Naive thymus-derived CD4-positive, alpha-beta T cell (primary cell): ENCODE measurements at regions of chr13 and their contacts with region 1.

Region 1: DNA sequence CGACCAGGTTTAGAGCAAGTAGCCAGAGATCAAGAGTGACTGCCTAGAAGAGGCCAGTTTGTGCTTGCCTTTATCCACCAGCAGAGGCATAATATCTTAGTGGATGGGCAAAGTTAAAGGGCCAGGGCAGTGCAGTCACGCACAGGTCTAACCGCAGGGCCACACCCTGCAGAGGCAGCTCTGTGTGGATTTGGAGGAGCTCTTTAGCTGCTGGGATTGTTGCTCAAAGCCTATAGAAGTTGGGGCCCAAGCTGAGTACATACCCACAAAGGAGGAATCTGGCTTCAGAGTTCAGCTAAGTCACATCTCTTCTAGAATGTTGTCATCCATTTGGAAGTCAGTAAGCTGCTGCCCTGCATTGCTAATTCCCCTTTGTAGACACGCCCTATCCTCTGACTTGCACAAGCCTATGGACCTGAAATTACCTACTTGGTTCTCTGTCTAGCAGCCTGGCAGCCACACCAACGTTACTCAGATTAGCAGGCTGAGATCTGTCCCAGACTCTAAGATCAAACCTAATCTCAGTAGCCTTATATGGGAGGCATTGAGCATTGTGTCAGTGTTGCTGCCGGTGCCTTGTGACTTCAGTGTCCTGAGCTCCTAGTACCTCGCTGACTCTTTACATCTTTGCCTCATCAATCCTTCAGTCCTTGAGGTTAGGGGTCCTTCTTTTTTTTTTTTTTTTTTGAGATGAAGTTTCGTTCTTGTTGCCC is 102.9 kb upstream of the STARD13 start:
- DNase-seq: no peak
- ATAC-seq: no peak
- H3K4me3 ChIP-seq: no peak overlapping the region
- H3K4me3 Mint-ChIP-seq: no peak overlapping the region
- H3K27ac ChIP-seq: no peak overlapping the region
- H3K27ac Mint-ChIP-seq: no peak overlapping the region
- H3K4me1 ChIP-seq: no peaks in the 10 kb centered on the region
- H3K4me1 Mint-ChIP-seq: no peaks in the 10 kb centered on the region
- H3K27me3 ChIP-seq: no peaks in the 10 kb centered on the region
- H3K27me3 Mint-ChIP-seq: peaks cover 0 to 15% (median 0%) of the 10 kb centered on the region in 5 donors

Region 2: GRCh38 chr13:33057019-33057780 is 331.2 kb before region 1 on chr13:
- CTCF ChIA-PET with region 1: no interaction called
- POLR2A ChIA-PET with region 1: no interaction called
- intact Hi-C with region 1: loop called in 1 of 2 experiments (anchors 10 kb)
- DNase-seq: no peak
- ATAC-seq: no peak
- H3K4me3 ChIP-seq: no peak overlapping the region
- H3K4me3 Mint-ChIP-seq: no peak overlapping the region
- H3K27ac ChIP-seq: no peak overlapping the region
- H3K27ac Mint-ChIP-seq: no peak overlapping the region
- H3K4me1 ChIP-seq: no peaks in the 10 kb centered on the region
- H3K4me1 Mint-ChIP-seq: peaks cover 0 to 3% (median 0%) of the 10 kb centered on the region in 7 donors
- H3K27me3 ChIP-seq: no peaks in the 10 kb centered on the region
- H3K27me3 Mint-ChIP-seq: no peaks in the 10 kb centered on the region